ENCODE measurements at regions of chr7 and their contacts with region 1.

Region 1: GRCh38 chr7:6447581-6448199 is at the start of gene DAGLB:
- DNase-seq: peak; percentile 98

Region 2: DNA sequence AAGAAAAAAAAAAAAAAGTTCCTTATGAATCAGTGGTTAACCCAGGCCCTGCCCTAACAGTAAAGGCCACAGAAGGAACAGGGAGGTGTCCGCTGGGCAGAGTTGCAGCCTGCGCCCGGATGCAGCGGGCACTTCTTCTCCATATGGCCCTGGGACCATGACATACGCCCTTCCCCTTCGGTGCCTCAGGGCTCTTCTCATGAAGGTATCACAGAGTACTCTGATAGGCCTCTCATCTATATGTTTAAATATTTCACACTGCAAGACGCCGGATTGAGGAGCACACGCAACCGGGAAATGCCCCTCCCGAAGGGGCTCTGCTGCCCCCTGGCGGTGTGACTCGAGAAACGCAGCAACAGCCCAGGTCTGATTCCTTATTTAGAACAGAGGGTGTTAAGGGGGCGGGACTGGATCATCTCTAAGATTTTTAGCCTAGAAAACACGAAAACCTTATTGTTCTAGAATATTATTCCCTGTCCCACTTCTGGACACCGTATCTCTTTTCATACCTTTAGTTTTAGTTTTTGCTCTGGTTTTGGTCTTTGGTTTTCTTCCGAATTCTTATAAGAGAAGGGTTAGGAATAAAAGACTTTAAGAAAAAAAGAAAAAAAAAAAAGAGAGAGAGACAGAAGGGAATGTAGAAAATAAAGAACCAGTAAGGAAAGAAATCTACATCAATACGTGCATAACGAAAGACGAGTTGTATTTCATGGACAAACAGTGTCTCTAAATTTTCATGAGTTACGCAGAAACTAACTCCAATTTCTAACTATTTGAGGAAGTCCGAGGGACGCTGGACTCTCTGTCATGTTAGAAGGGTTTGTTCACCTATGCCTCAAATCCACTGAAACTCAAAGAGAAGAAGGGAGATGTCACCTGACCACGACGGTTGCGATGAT is 12.0 kb before region 1 on chr7:
- CTCF ChIA-PET with region 1: no interaction called
- POLR2A ChIA-PET with region 1: interaction called, 10 read pairs
- DNase-seq: peak; percentile 88

Measured in HEK293T (cell line).